GM12878 (cell line): ENCODE measurements at regions of chr17 and their contacts with region 1.

Region 1: GRCh38 chr17:82494236-82495055 is 25.1 kb upstream of the FOXK2 start:
- DNase-seq: peak; percentile 89
- ATAC-seq: peak; percentile 85
- H3K4me3 ChIP-seq: peak overlapping the region; percentile 35; the same call in 1 of the 2 replicates
- H3K27ac ChIP-seq: no peak overlapping the region
- H3K4me1 ChIP-seq: peaks cover 29% of the 10 kb centered on the region
- H3K27me3 ChIP-seq: no peaks in the 10 kb centered on the region
- CTCF ChIP-seq: peak; percentile 87 to 97 (median 93)
- EP300 ChIP-seq: peak in 1 of 2 experiments; percentile 47; a peak in 1 of 4 replicates
- POLR2A ChIP-seq: no peak
- RAD21 ChIP-seq: peak; percentile 52

Region 2: DNA sequence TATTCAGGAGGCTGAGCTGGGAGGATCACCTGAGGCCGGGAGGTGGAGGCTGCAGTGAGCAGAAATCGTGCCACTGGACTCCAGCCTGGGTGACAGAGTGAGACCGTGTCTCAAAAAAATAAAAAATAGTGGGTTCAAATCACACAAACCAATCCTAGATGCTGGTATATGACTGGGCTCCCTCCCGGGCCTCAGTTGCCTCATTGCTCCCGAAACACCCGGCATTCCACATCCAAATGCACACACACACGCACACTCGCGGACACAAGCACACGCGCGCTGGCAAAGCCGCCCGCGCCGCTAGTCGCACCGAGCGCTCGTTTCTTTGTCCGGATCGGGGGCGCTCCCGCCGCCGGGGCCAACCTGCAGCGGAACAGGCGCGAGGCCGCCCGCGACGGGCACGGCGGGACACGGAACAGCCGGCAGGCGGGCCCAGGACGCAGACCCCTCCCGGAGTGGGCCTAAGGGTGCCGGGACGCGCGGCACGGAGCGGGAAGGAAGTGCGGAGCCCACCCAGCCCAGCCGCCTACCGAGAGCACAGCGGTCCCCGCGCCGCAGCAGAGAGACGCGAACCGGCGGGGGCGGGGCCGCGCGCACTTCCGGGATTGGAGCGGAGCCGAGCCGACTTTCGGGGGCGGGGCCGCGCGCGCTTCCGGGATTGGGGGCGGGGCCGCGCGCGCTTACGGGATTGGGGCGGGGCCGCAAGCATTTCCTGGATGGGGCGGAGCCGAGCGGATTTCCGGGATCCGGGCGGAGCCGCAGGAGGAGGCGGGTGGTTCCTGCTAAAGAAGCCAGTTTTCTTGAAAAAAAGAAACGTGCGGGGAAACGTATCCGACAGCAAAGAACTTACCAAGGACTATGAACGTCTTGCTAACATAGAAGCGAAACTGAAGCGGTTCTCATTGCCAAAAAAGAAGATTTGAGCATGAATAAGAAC is 44.0 kb before region 1 on chr17 and contains the start of gene CYBC1:
- CTCF ChIA-PET with region 1: interaction called, 4 read pairs
- POLR2A ChIA-PET with region 1: interaction called, 3 read pairs
- RAD21 ChIA-PET with region 1: interaction called, 3 read pairs
- SMC1A ChIA-PET with region 1: interaction called, 3 read pairs
- in situ Hi-C with region 1: no loop called
- intact Hi-C with region 1: loop called (anchors 1 kb)
- DNase-seq: peak; percentile 63
- ATAC-seq: peak; percentile 79
- H3K4me3 ChIP-seq: peak within 1 kb of the TSS; percentile 93
- H3K27ac ChIP-seq: peak within 1 kb of the TSS; percentile 97
- H3K4me1 ChIP-seq: peaks cover 4% of the 10 kb centered on the region
- H3K27me3 ChIP-seq: no peaks in the 10 kb centered on the region
- CTCF ChIP-seq: no peak
- EP300 ChIP-seq: no peak
- POLR2A ChIP-seq: peak; percentile 98
- RAD21 ChIP-seq: no peak
- polyA plus RNA-seq, gene CYBC1: 4.2 to 8.5 TPM

Region 3: GRCh38 chr17:82457997-82458864 is 36.2 kb before region 1 on chr17 and contains the start of gene NARF:
- CTCF ChIA-PET with region 1: interaction called, 3 read pairs
- POLR2A ChIA-PET with region 1: interaction called, 3 read pairs
- RAD21 ChIA-PET with region 1: no interaction called
- SMC1A ChIA-PET with region 1: no interaction called
- in situ Hi-C with region 1: no loop called
- intact Hi-C with region 1: loop called (anchors 1 kb)
- DNase-seq: peak; percentile 87
- ATAC-seq: peak; percentile 99
- H3K4me3 ChIP-seq: peak within 1 kb of the TSS; percentile 92
- H3K27ac ChIP-seq: peak within 1 kb of the TSS; percentile 99
- H3K4me1 ChIP-seq: peaks cover 6% of the 10 kb centered on the region
- H3K27me3 ChIP-seq: no peaks in the 10 kb centered on the region
- CTCF ChIP-seq: no peak
- EP300 ChIP-seq: no peak
- POLR2A ChIP-seq: peak; percentile 95
- RAD21 ChIP-seq: no peak
- polyA plus RNA-seq, gene NARF: 16.7 to 27.4 TPM

Region 4: GRCh38 chr17:82507631-82508175 is 13.3 kb after region 1 on chr17:
- CTCF ChIA-PET with region 1: interaction called, 26 read pairs
- POLR2A ChIA-PET with region 1: interaction called, 11 read pairs
- RAD21 ChIA-PET with region 1: interaction called, 4 read pairs
- SMC1A ChIA-PET with region 1: interaction called, 12 read pairs
- in situ Hi-C with region 1: no loop called
- intact Hi-C with region 1: no loop called
- DNase-seq: no peak
- ATAC-seq: no peak
- H3K4me3 ChIP-seq: no peak overlapping the region
- H3K27ac ChIP-seq: no peak overlapping the region; the same call in 1 of the 2 replicates
- H3K4me1 ChIP-seq: peaks cover 11% of the 10 kb centered on the region
- H3K27me3 ChIP-seq: no peaks in the 10 kb centered on the region
- CTCF ChIP-seq: no peak
- EP300 ChIP-seq: no peak
- POLR2A ChIP-seq: no peak
- RAD21 ChIP-seq: no peak

Region 5: GRCh38 chr17:82518826-82519810 is 24.7 kb after region 1 on chr17 and contains the start of gene FOXK2:
- CTCF ChIA-PET with region 1: interaction called, 4 read pairs
- POLR2A ChIA-PET with region 1: interaction called, 7 read pairs
- RAD21 ChIA-PET with region 1: interaction called, 9 read pairs
- SMC1A ChIA-PET with region 1: interaction called, 3 read pairs
- in situ Hi-C with region 1: no loop called
- intact Hi-C with region 1: loop called (anchors 1 kb)
- DNase-seq: peak; percentile 75
- ATAC-seq: peak; percentile 98
- H3K4me3 ChIP-seq: peak within 1 kb of the TSS; percentile 71
- H3K27ac ChIP-seq: peak within 1 kb of the TSS; percentile 90
- H3K4me1 ChIP-seq: peaks cover 5% of the 10 kb centered on the region
- H3K27me3 ChIP-seq: no peaks in the 10 kb centered on the region
- CTCF ChIP-seq: no peak
- EP300 ChIP-seq: no peak
- POLR2A ChIP-seq: peak; percentile 55
- RAD21 ChIP-seq: no peak
- polyA plus RNA-seq, gene FOXK2: 2.4 to 3.8 TPM

Region 6: DNA sequence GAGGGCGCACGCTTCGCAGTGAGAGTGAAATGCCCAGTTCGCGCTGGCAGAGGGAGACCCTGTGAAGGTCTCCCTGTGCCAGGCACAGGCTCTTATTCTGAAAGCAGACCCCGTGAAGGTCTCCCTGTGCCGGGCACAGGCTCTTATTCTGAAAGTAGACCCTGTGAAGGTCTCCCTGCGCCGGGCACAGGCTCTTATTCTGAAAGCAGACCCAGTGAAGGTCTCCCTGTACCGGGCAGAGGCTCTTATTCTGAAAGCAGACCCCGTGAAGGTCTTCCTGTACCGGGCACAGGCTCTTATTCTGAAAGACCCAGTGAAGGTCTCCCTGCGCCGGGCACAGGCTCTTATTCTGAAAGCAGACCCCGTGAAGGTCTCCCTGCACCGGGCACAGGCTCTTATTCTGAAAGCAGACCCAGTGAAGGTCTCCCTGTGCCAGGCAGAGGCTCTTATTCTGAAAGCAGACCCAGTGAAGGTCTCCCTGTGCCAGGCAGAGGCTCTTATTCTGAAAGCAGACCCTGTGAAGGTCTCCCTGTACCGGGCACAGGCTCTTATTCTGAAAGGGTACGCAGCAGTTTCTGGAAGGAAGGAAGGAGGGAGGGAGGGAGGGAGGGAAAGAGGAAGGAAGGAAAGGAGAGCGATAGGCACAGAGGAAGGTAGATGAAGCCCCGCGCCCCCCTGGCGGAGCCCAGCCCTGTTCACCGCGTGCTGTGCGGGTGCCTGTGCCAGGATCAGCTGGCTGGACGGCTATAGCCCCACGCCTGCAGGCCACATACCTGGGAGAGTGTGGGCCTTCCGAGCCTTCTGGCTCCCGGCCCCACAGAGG is 98.5 kb after region 1 on chr17:
- CTCF ChIA-PET with region 1: no interaction called
- POLR2A ChIA-PET with region 1: no interaction called
- RAD21 ChIA-PET with region 1: no interaction called
- SMC1A ChIA-PET with region 1: no interaction called
- in situ Hi-C with region 1: no loop called
- intact Hi-C with region 1: no loop called
- DNase-seq: peak; percentile 30
- ATAC-seq: peak; percentile 47
- H3K4me3 ChIP-seq: peak overlapping the region; percentile 47
- H3K27ac ChIP-seq: peak overlapping the region; percentile 59; the same call in 1 of the 2 replicates
- H3K4me1 ChIP-seq: peaks cover 17% of the 10 kb centered on the region
- H3K27me3 ChIP-seq: no peaks in the 10 kb centered on the region
- CTCF ChIP-seq: no peak
- EP300 ChIP-seq: no peak
- POLR2A ChIP-seq: no peak
- RAD21 ChIP-seq: no peak